OCI-LY7 (cell line): ENCODE measurements at regions of chr10 and their contacts with region 1.

Region 1: GRCh38 chr10:306675-307185 is 171.5 kb downstream of the ZMYND11 start:
- DNase-seq: peak; percentile 91
- H3K4me3 ChIP-seq: peak overlapping the region; percentile 58
- H3K27ac ChIP-seq: peak overlapping the region; percentile 96
- H3K4me1 ChIP-seq: peaks cover 94% of the 10 kb centered on the region
- CTCF ChIP-seq: no peak

Region 2: DNA sequence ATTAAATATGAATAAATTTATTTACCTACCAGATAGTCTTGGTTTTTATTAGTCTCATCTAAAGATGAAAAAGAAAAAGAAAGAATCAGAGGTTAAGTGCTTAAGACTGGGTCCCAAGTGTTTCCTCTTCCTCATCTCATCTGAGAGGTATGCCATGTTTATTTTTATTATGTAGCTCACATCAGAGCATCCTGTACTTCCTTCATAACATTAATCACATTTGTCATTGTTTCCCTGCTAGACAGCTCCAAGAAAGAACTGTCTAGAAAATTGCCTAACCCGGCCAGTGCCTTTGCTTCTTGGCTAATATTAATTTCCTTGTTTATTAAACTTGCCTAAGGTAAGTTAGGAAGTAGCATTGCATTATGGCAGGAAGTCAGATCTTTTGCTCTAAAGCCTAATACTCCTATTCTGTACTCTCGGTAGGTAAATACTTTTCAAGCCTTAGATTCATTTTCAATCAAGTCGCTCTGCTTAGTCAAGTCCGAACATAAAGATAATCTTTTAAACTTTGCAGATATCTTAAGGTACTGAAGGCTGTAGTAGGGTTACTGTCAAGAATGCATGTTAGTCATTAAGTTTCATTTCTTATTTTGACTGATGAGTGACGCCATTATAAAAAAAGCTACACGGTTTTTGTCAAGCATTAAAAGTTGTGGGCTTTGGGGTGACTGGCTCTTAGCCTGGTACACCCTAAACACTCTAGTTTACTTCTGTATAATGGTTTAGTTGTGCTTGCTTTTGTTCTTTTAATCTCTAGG is 124.1 kb before region 1 on chr10:
- CTCF ChIA-PET with region 1: no interaction called
- POLR2A ChIA-PET with region 1: no interaction called
- intact Hi-C with region 1: no loop called
- DNase-seq: no peak
- H3K4me3 ChIP-seq: no peak overlapping the region
- H3K27ac ChIP-seq: no peak overlapping the region
- H3K4me1 ChIP-seq: no peaks in the 10 kb centered on the region
- CTCF ChIP-seq: no peak

Region 3: GRCh38 chr10:287814-288213 is 18.9 kb before region 1 on chr10:
- CTCF ChIA-PET with region 1: interaction called, 5 read pairs
- POLR2A ChIA-PET with region 1: interaction called, 6 read pairs
- intact Hi-C with region 1: loop called (anchors 1 kb)
- DNase-seq: no peak
- H3K4me3 ChIP-seq: peak overlapping the region; percentile 36
- H3K27ac ChIP-seq: peak overlapping the region; percentile 94
- H3K4me1 ChIP-seq: peaks cover 73% of the 10 kb centered on the region
- CTCF ChIP-seq: peak; percentile 26; the same call in 1 of the 2 replicates

Region 4: GRCh38 chr10:293636-294035 is 13.1 kb before region 1 on chr10:
- CTCF ChIA-PET with region 1: interaction called, 5 read pairs
- POLR2A ChIA-PET with region 1: interaction called, 13 read pairs
- intact Hi-C with region 1: loop called (anchors 1 kb)
- DNase-seq: peak; percentile 43
- H3K4me3 ChIP-seq: peak overlapping the region; percentile 28
- H3K27ac ChIP-seq: peak overlapping the region; percentile 56
- H3K4me1 ChIP-seq: peaks cover 82% of the 10 kb centered on the region
- CTCF ChIP-seq: no peak

Region 5: GRCh38 chr10:317271-317769 is 10.6 kb after region 1 on chr10:
- CTCF ChIA-PET with region 1: interaction called, 5 read pairs
- POLR2A ChIA-PET with region 1: interaction called, 15 read pairs
- intact Hi-C with region 1: no loop called
- DNase-seq: peak; percentile 91
- H3K4me3 ChIP-seq: peak overlapping the region; percentile 32
- H3K27ac ChIP-seq: peak overlapping the region; percentile 71
- H3K4me1 ChIP-seq: peaks cover 58% of the 10 kb centered on the region
- CTCF ChIP-seq: no peak

Region 6: GRCh38 chr10:373522-374309 is 67.0 kb after region 1 on chr10:
- CTCF ChIA-PET with region 1: no interaction called
- POLR2A ChIA-PET with region 1: no interaction called
- intact Hi-C with region 1: no loop called
- DNase-seq: no peak
- H3K4me3 ChIP-seq: no peak overlapping the region
- H3K27ac ChIP-seq: no peak overlapping the region
- H3K4me1 ChIP-seq: peaks cover 4% of the 10 kb centered on the region
- CTCF ChIP-seq: no peak

Region 7: GRCh38 chr10:436911-437665 is 130.4 kb after region 1 on chr10:
- CTCF ChIA-PET with region 1: no interaction called
- POLR2A ChIA-PET with region 1: no interaction called
- intact Hi-C with region 1: no loop called
- DNase-seq: no peak
- H3K4me3 ChIP-seq: no peak overlapping the region
- H3K27ac ChIP-seq: no peak overlapping the region
- H3K4me1 ChIP-seq: no peaks in the 10 kb centered on the region
- CTCF ChIP-seq: no peak

Region 8: DNA sequence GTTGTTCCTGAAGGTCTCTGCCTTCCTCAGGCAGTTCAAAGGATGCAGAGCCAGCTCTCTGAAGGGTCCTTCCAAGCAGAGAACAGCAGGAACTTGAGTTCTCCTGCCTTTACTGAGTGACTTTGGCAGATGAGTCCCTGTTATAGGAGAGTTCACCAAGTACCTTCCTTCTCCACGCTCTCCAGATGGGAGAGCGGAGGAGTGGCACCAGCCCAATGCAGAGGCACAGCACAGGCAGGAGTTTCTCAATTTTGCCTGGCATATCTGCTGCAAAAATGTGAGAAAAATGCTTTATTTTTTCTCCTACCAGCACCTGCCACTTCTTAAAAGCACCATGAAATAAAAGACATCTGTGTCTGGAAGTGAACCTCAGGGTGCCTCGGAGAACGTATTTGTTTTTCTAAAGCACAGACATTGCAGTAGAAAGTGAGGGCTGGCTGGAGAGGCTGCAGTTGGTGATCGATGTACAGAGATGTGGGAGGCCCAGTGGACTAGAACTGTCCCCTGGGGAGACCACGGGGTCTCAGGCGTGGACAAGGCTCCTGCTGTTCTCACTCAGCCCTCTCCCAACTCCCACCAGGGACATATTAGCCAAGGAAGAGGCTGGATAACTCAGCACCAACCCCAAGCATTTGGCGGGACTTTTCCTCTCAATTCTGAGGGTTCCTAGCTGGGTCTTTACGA is 924.0 kb after region 1 on chr10:
- CTCF ChIA-PET with region 1: no interaction called
- POLR2A ChIA-PET with region 1: no interaction called
- intact Hi-C with region 1: no loop called
- DNase-seq: no peak
- H3K4me3 ChIP-seq: no peak overlapping the region
- H3K27ac ChIP-seq: no peak overlapping the region
- H3K4me1 ChIP-seq: no peaks in the 10 kb centered on the region
- CTCF ChIP-seq: no peak